ENCODE measurements at regions of chr11 and their contacts with region 1.

Region 1: GRCh38 chr11:1639102-1639620 is 9.6 kb downstream of the KRTAP5-5 start:
- DNase-seq: no peak
- H3K4me3 ChIP-seq: no peak overlapping the region
- CTCF ChIP-seq: no peak

Region 2: DNA sequence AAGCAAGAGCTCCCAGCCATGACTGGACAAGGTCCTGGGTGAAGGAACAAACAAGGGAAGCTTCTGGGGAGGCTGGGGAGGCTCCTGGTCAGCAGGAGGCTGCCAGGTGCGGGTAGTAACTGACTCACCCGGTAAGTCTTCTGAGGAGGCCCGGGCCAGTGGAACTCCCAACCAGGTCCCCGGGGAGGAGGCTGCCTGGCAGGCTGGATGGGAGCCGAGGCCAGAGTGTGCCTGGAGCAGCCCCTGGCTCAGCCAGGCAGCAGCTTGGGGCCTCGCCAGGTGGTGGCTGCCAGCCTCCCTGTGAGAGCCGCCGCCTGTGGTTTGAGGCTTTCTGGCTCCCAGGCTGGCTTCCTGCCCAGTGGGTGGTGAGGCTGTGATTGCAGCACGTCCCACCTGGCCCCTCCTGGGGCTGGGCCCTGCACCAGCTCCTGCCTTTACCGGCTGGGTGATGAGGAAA is 453.8 kb after region 1 on chr11:
- in situ Hi-C with region 1: loop called (anchors 10 kb)
- DNase-seq: peak; percentile 52
- H3K4me3 ChIP-seq: no peak overlapping the region
- CTCF ChIP-seq: no peak

Measured in astrocyte of the cerebellum (primary cell).